HCT116 (cell line): ENCODE measurements at regions of chr3 and their contacts with region 1.

Region 1: DNA sequence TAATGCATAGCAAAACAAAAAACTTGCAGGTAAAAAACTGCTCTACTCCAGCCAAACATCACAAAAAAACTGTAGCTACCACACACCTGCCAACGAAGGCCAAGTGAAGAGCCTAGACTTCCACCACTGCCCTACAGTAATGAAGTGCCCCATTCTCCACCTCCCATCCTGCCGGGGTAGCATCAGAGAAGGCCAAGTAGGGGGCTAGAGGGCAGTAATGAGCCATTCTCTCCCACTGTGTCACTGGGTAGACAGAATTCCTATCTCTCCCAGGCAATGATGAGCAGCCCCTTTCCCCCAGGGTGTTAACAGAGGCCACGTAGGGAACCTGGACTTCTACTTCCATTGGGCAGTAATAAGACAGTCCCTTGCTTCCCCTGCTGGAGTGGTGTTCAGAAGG is 9.5 kb downstream of the SEC22C start:
- DNase-seq: peak; percentile 41
- ATAC-seq: peak; percentile 100
- H3K4me3 ChIP-seq: no peak overlapping the region
- H3K27ac ChIP-seq: no peak overlapping the region
- H3K4me1 ChIP-seq: peaks cover 0 to 5% of the 10 kb centered on the region in 2 experiments; a peak in 1 of 4 replicates
- H3K27me3 ChIP-seq: no peaks in the 10 kb centered on the region
- CTCF ChIP-seq: peak; percentile 60 to 79 (median 69)
- POLR2A ChIP-seq: no peak
- RAD21 ChIP-seq: peak; percentile 72

Region 2: GRCh38 chr3:42518800-42519567 is 53.3 kb before region 1 on chr3:
- CTCF ChIA-PET with region 1: no interaction called
- POLR2A ChIA-PET with region 1: no interaction called
- RAD21 ChIA-PET with region 1: no interaction called
- intact Hi-C with region 1: no loop called
- DNase-seq: no peak
- ATAC-seq: peak; percentile 65
- H3K4me3 ChIP-seq: no peak overlapping the region
- H3K27ac ChIP-seq: no peak overlapping the region
- H3K4me1 ChIP-seq: no peaks in the 10 kb centered on the region
- H3K27me3 ChIP-seq: no peaks in the 10 kb centered on the region
- CTCF ChIP-seq: peak; percentile 16 to 42 (median 38); a peak in 4 of 6 replicates
- POLR2A ChIP-seq: no peak
- RAD21 ChIP-seq: no peak; the same call in none of the 2 replicates

Region 3: GRCh38 chr3:42745776-42746454 is 173.6 kb after region 1 on chr3:
- CTCF ChIA-PET with region 1: no interaction called
- POLR2A ChIA-PET with region 1: no interaction called
- RAD21 ChIA-PET with region 1: no interaction called
- intact Hi-C with region 1: loop called (anchors 2 kb)
- DNase-seq: no peak
- ATAC-seq: no peak
- H3K4me3 ChIP-seq: no peak overlapping the region
- H3K27ac ChIP-seq: no peak overlapping the region
- H3K4me1 ChIP-seq: peaks cover 0 to 22% of the 10 kb centered on the region in 2 experiments; a peak in 2 of 4 replicates
- H3K27me3 ChIP-seq: no peaks in the 10 kb centered on the region
- CTCF ChIP-seq: no peak
- POLR2A ChIP-seq: no peak
- RAD21 ChIP-seq: no peak

Region 4: DNA sequence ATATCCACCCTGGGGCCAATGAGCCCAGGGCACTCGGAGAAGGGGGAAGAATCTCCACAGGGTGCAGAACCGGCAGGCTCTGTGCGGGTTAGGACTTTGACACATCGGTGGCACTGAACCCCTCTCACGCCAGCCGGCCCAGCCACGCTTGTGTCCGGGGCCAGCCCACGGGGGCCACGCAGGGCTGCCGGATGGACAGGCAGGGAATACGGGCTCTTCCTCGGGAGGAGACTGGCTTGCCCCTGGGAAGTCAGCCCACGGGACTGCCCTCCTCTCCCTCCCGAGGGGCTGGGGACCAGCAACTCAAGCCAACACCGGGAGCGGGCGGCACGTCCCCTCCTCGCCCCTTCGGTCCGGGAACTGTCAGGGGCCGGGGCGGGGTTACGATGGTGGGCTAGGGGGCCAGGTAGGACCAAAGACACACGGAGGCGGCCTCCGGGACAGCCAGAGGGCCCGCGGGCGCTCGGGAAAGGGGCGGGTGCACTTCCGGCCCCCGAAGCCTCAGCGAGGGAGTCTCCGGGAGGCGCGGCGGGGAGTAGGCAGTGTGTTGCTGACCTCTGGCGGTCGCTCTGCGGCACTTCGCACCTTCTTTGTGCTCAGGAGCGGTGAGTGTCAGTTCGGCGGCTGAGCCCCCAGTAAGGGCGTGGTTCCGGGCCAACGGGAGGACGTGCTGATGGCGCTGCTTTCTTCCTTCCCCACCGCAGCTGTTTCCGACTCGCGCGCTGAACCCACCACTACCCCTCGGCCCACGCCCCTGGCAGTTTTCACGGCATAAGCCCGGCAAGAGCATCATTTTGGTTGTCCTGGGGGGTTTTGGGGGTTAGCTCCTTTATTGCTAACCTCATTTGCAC is 308.5 kb after region 1 on chr3:
- CTCF ChIA-PET with region 1: no interaction called
- POLR2A ChIA-PET with region 1: no interaction called
- RAD21 ChIA-PET with region 1: no interaction called
- intact Hi-C with region 1: loop called (anchors 5 kb)
- DNase-seq: peak; percentile 55
- ATAC-seq: peak; percentile 99
- H3K4me3 ChIP-seq: peak overlapping the region; percentile 42 to 53
- H3K27ac ChIP-seq: peak overlapping the region; percentile 30; the same call in 1 of the 2 replicates
- H3K4me1 ChIP-seq: peaks cover 0 to 13% of the 10 kb centered on the region in 2 experiments; a peak in 3 of 4 replicates
- H3K27me3 ChIP-seq: no peaks in the 10 kb centered on the region
- CTCF ChIP-seq: peak; percentile 74 to 86 (median 82)
- POLR2A ChIP-seq: no peak
- RAD21 ChIP-seq: peak; percentile 94

Region 5: DNA sequence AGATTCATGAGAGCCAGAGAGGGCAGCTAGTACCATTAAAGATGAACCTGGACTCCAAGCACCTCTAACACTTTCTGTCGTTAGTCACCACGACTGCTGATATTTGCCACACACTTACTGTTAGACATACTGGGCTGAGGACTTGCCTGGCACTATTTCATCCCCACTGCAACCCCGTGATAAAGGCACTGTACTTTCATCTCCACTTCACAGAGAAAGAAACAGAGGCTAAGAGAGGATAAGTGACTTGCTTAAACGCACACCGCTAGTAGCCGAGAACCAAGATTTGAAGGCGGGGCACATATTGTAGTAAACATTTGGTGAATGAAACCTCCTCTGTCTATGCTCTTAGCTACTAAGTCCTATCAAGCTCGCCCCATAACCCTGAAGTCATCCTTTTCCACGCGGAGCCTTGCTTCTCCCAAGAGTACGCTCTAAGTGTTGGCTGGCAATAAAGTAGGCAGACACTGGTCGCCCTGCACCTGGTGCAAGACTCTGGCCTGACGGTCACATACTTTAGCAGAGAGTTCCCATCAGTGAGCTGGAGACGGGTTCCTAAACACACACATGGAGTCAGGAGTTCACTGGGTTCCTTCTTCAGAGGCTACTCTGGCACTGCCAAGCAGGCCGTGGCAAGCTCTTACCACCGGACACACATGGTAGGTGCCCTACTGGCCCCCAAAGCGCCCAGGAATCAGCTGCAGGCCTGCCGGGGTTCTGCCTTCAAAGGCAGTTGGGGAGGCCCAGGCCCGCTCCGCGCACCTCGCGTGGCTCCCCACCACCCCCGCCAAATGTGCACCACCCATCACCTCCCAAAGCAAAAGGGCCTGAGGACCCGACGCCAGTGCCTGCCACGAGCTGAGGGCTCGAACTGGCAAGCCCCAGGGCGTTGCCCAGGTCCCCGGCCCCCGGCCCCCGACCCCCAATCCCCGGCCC is 532.6 kb after region 1 on chr3:
- CTCF ChIA-PET with region 1: no interaction called
- POLR2A ChIA-PET with region 1: no interaction called
- RAD21 ChIA-PET with region 1: no interaction called
- intact Hi-C with region 1: loop called (anchors 5 kb)
- DNase-seq: no peak
- ATAC-seq: peak; percentile 16
- H3K4me3 ChIP-seq: peak overlapping the region; percentile 64 to 79
- H3K27ac ChIP-seq: no peak overlapping the region
- H3K4me1 ChIP-seq: peaks cover 0 to 15% of the 10 kb centered on the region in 2 experiments; a peak in 2 of 4 replicates
- H3K27me3 ChIP-seq: no peaks in the 10 kb centered on the region
- CTCF ChIP-seq: no peak
- POLR2A ChIP-seq: no peak
- RAD21 ChIP-seq: no peak